ENCODE measurements at regions of chr11 and their contacts with region 1.

Region 1: GRCh38 chr11:67146516-67147226 is 27.6 kb downstream of the KDM2A start:
- DNase-seq: no peak
- H3K4me3 ChIP-seq: no peak overlapping the region
- H3K27ac ChIP-seq: no peak overlapping the region
- H3K4me1 ChIP-seq: no peaks in the 10 kb centered on the region
- H3K27me3 ChIP-seq: no peaks in the 10 kb centered on the region
- CTCF ChIP-seq: no peak
- EP300 ChIP-seq: no peak
- POLR2A ChIP-seq: no peak
- RAD21 ChIP-seq: no peak

Region 2: GRCh38 chr11:67167086-67167485 is 20.4 kb after region 1 on chr11:
- CTCF ChIA-PET with region 1: interaction called, 10 read pairs
- POLR2A ChIA-PET with region 1: no interaction called
- DNase-seq: no peak
- H3K4me3 ChIP-seq: no peak overlapping the region
- H3K27ac ChIP-seq: no peak overlapping the region
- H3K4me1 ChIP-seq: no peaks in the 10 kb centered on the region
- H3K27me3 ChIP-seq: no peaks in the 10 kb centered on the region
- CTCF ChIP-seq: no peak
- EP300 ChIP-seq: no peak
- POLR2A ChIP-seq: no peak
- RAD21 ChIP-seq: no peak

Measured in H1 (cell line).